ENCODE measurements at regions of chr1 and their contacts with region 1.

Region 1: DNA sequence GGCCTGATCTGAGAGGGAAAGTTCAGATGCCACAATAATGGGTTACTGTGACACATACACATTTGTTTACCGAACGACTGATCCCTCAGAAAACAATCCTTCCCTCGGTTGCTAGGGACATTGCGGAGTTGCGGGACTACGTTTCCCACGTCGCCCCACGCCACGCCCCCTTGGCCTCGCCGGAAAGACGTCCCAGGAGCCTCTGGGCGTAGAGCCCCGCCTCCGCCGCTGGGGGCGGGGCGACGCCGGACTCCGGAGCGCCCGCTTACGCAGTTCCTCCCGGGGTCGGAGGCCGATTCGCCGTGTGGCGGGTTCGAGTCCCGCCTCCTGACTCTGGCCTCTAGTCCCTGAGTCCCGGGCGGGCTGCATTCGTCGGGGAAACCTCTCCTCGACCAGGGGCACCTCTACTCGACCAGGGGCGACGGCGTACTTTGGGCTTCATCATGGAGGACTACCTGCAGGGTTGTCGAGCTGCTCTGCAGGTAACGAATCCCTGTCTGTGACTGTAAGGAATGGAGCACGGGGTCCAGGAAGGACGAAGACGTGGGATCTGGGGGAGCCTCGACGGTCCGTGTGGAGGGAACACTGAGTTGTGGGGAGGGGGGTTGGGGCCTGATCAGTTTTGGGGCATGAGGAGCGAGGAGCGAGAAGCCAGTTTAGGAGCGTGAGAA is at the start of gene PRUNE1:
- DNase-seq: peak; percentile 97
- H3K4me3 Mint-ChIP-seq: peak within 1 kb of the TSS; percentile 92
- H3K27ac Mint-ChIP-seq: peak within 1 kb of the TSS; percentile 99
- H3K4me1 Mint-ChIP-seq: peaks cover 56% of the 10 kb centered on the region
- H3K27me3 Mint-ChIP-seq: no peaks in the 10 kb centered on the region
- total RNA-seq, gene PRUNE1: 13.3 to 15.9 TPM

Region 2: GRCh38 chr1:150053926-150054325 is 954.4 kb before region 1 on chr1:
- CTCF ChIA-PET with region 1: no interaction called
- intact Hi-C with region 1: no loop called
- DNase-seq: no peak
- H3K4me3 Mint-ChIP-seq: no peak overlapping the region
- H3K27ac Mint-ChIP-seq: no peak overlapping the region
- H3K4me1 Mint-ChIP-seq: peaks cover 2% of the 10 kb centered on the region
- H3K27me3 Mint-ChIP-seq: no peaks in the 10 kb centered on the region

Region 3: GRCh38 chr1:150578965-150579798 is 429.1 kb before region 1 on chr1 and contains the start of gene MCL1:
- CTCF ChIA-PET with region 1: no interaction called
- intact Hi-C with region 1: loop called (anchors 1 kb)
- DNase-seq: peak; percentile 95
- H3K4me3 Mint-ChIP-seq: peak within 1 kb of the TSS; percentile 90
- H3K27ac Mint-ChIP-seq: peak within 1 kb of the TSS; percentile 99
- H3K4me1 Mint-ChIP-seq: peaks cover 19% of the 10 kb centered on the region
- H3K27me3 Mint-ChIP-seq: no peaks in the 10 kb centered on the region
- total RNA-seq, gene MCL1: 228 to 235 TPM

Region 4: GRCh38 chr1:150765296-150765976 is 242.9 kb before region 1 on chr1 and contains the start of gene CTSS:
- CTCF ChIA-PET with region 1: no interaction called
- intact Hi-C with region 1: loop called (anchors 2 kb)
- DNase-seq: no peak
- H3K4me3 Mint-ChIP-seq: peak within 1 kb of the TSS; percentile 90
- H3K27ac Mint-ChIP-seq: peak within 1 kb of the TSS; percentile 94
- H3K4me1 Mint-ChIP-seq: peaks cover 48% of the 10 kb centered on the region
- H3K27me3 Mint-ChIP-seq: no peaks in the 10 kb centered on the region
- total RNA-seq, gene CTSS: 37.0 to 37.7 TPM

Region 5: DNA sequence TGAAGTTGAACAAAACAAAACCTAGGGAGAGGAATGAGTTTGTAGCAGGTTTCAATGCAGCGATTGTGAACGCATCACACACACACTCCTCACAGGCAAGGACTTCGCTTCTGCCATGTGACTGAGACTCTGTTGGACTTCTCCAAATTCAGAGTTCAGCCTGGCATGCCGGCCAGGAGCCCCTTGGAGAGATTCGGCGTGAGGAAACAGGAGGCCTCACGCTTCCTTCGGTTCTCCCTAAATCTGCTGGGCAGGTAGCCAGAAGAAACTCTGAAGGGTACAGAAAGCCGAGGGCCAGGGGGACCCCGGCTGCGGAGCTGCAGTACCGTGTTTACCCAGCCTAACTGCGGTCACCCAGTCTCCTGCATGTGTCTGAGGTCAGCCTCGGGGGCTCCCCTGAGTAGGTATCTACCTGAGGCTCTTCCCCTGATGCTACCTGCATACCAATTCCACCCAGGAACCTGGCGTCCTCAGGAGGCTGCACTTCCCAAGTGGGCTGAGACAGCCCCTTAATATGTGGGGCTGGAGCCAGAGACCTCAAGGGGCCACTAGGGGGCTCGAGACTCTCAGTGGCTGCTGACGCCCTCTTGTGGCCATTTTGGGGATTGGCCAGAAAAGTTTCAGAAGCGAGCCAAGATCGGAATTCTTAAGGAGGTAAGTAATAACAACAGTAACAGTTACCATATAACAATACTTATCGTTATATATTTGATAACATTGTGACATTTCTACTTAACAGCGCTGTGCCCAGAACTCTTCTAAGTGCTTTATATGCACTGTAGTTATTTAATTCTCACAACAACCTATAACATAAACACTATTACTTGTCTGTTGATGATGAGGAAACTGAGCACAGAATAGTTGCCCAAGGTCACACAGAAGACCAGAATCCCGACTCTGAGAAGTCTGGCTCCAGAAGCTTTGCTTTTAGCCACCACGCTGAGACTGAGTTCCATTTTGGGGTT is 29.0 kb before region 1 on chr1:
- CTCF ChIA-PET with region 1: interaction called, 171 read pairs
- intact Hi-C with region 1: loop called (anchors 1 kb)
- DNase-seq: peak; percentile 94
- H3K4me3 Mint-ChIP-seq: peak overlapping the region; percentile 43
- H3K27ac Mint-ChIP-seq: peak overlapping the region; percentile 53
- H3K4me1 Mint-ChIP-seq: peaks cover 39% of the 10 kb centered on the region
- H3K27me3 Mint-ChIP-seq: no peaks in the 10 kb centered on the region

Region 6: DNA sequence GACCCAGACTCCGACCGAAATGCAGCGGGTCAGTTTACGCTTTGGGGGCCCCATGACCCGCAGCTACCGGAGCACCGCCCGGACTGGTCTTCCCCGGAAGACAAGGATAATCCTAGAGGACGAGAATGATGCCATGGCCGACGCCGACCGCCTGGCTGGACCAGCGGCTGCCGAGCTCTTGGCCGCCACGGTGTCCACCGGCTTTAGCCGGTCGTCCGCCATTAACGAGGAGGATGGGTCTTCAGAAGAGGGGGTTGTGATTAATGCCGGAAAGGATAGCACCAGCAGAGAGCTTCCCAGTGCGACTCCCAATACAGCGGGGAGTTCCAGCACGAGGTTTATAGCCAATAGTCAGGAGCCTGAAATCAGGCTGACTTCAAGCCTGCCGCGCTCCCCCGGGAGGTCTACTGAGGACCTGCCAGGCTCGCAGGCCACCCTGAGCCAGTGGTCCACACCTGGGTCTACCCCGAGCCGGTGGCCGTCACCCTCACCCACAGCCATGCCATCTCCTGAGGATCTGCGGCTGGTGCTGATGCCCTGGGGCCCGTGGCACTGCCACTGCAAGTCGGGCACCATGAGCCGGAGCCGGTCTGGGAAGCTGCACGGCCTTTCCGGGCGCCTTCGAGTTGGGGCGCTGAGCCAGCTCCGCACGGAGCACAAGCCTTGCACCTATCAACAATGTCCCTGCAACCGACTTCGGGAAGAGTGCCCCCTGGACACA is 39.8 kb after region 1 on chr1:
- CTCF ChIA-PET with region 1: interaction called, 8 read pairs
- intact Hi-C with region 1: loop called (anchors 2 kb)
- DNase-seq: peak; percentile 66
- H3K4me3 Mint-ChIP-seq: peak overlapping the region; percentile 87
- H3K27ac Mint-ChIP-seq: peak overlapping the region; percentile 78
- H3K4me1 Mint-ChIP-seq: peaks cover 38% of the 10 kb centered on the region
- H3K27me3 Mint-ChIP-seq: no peaks in the 10 kb centered on the region

Region 7: DNA sequence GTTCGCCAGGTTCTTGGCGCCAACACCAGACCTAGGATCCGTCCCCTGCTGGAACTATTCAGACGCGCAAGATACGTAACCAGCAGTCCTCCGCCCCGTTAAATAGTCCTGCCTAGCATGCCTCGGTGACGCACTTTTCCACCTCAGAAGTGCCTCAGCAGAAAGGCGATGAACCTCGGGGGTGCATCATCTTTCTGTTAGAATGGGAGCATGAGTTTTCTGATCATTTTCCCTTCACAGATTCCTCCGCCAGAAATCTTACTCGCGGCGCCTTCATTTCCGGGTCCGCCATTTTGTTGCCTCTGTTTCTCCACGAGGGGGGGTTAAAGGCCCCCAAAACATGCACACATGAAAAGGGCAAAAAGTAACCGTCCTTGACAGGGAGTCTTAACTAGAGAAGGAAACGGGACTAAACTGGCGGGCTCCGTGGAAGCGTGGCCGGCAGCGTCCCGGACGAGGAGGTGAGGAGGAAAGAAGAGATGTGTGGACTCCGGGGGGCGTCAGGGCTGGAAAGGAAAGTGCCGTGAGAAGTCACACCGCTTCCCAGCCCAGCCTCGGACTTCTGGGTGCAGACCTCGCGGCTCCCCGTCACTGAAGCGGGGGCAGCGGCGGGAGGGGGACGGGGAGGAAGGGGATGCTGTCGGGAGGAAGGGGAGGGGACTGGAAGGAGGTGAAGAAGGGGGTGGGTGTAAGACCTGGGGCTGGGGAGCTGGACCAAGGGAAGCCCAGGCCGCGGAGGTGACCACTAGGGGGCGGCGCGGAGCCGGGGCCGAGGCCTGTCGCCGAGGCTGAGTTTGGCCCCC is 62.4 kb after region 1 on chr1 and contains the start of gene GABPB2:
- CTCF ChIA-PET with region 1: interaction called, 5 read pairs
- intact Hi-C with region 1: loop called (anchors 1 kb)
- DNase-seq: peak; percentile 92
- H3K4me3 Mint-ChIP-seq: peak within 1 kb of the TSS; percentile 99
- H3K27ac Mint-ChIP-seq: peak within 1 kb of the TSS; percentile 100
- H3K4me1 Mint-ChIP-seq: peaks cover 26% of the 10 kb centered on the region
- H3K27me3 Mint-ChIP-seq: no peaks in the 10 kb centered on the region
- total RNA-seq, gene GABPB2: 16.1 to 16.2 TPM

Region 8: GRCh38 chr1:151124763-151125403 is 116.6 kb after region 1 on chr1:
- CTCF ChIA-PET with region 1: no interaction called
- intact Hi-C with region 1: no loop called
- DNase-seq: no peak
- H3K4me3 Mint-ChIP-seq: no peak overlapping the region
- H3K27ac Mint-ChIP-seq: no peak overlapping the region
- H3K4me1 Mint-ChIP-seq: no peaks in the 10 kb centered on the region
- H3K27me3 Mint-ChIP-seq: no peaks in the 10 kb centered on the region

Region 9: GRCh38 chr1:151327223-151327902 is 319.0 kb after region 1 on chr1 and contains the start of gene PI4KB:
- CTCF ChIA-PET with region 1: no interaction called
- intact Hi-C with region 1: loop called (anchors 1 kb)
- DNase-seq: peak; percentile 96
- H3K4me3 Mint-ChIP-seq: peak within 1 kb of the TSS; percentile 93
- H3K27ac Mint-ChIP-seq: peak within 1 kb of the TSS; percentile 96
- H3K4me1 Mint-ChIP-seq: peaks cover 35% of the 10 kb centered on the region
- H3K27me3 Mint-ChIP-seq: no peaks in the 10 kb centered on the region
- total RNA-seq, gene PI4KB: 64.1 to 69.2 TPM

Measured in activated naive CD4-positive, alpha-beta T cell treated with anti-CD3 and anti-CD28 coated beads for 36 hours (primary cell).